Activated T-helper 1 cell treated with anti-CD3 and anti-CD28 coated beads, Interleukin-12 subunit alpha, Interleukin-12 subunit beta, Interleukin-2, Interleukin-4 antibody, amounts not matched to agents 30 ng/mL and 10 ng/mL and 1 ng/mL, durations not matched to agents 14 hours and 24 hours and 36 hours (primary cell): ENCODE measurements at regions of chr19 and their contacts with region 1.

Region 1: DNA sequence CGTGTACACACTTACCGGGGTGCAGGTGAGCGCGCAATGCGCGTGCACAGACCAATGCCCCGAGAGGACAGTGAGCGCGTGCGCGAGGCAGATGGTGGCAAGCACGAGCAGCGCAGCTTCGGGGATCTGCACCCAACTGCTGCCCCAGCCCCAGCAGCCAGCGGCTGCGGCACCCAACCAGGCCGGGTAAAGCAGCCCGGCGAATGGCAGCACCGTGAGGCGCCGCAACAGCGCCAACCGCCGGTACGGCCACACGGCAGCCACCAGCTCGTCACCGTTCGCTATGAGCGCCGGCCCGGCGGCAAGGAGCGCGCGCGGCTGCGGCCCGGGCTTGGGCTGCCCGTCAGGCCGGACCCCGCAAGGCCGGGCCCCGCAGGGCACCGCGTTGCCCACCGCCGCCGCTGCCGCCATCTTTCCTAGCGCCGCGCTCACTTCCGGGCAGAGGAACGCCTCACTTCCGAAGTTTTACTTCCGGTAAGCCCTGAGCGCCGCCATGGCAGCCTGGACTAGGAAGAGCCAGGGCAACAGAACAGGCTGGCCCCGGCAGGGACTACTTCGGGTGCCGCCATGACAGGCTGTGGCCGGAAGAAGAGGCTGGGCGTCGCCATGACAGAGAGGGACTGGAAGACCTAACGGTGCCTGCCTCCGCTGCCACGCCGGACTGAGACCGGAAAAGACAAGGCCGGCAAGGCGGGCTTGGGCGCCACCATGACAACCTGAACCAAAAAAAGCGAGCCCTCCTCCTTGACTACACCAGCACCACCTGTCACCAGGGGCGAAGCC is at the start of gene ATP13A1:
- DNase-seq: peak; percentile 93
- H3K4me3 Mint-ChIP-seq: peak within 1 kb of the TSS; percentile 91
- H3K27ac Mint-ChIP-seq: peak within 1 kb of the TSS; percentile 98
- H3K4me1 Mint-ChIP-seq: peaks cover 28% of the 10 kb centered on the region
- H3K27me3 Mint-ChIP-seq: no peaks in the 10 kb centered on the region
- total RNA-seq, gene ATP13A1: 101 and 104 TPM in 2 replicates

Region 2: DNA sequence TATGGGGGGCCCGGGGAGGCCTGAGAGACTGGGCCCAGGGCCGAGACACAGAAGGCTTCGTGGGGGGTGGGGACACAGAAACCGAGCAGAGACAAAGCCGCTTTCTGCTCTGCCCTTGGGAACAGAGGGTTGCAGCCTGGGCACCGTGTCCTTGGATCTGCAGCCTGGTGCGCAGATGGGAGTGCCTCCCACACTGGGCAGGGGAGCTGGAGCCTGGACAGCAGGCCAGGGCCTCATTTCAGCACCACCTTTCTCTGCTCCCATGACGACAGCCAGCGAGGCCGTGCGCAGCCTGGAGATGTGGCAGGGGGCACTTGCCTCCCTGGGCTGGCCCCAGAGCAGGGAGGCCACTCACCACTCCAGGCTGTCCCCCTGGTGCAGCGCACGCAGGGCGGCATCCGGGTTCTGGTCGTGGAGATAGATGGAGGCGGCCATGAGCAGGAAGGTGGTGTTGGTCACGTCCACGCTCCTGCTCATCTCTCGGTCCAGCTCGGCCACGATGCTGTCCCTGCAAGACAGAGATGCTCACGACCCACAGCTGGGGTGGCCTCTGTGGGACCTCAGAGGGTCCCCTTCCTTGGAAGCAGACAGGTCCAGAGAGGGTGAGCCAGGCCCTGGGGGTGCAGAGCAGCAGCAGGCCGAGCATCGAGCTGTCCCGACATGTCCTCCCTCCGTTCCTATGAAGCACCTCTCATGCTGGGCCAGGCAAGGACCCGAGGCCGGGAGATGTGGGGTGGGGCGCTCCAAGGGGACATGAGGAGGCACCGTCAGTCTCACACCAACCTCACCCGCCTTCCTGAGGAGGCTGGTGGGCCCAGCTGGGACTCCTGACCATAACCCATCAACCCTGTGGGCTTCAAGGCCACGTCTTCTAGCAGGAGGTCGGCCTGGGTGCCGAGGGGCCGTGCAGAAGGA is 756.6 kb before region 1 on chr19:
- intact Hi-C with region 1: no loop called
- DNase-seq: no peak
- H3K4me3 Mint-ChIP-seq: no peak overlapping the region
- H3K27ac Mint-ChIP-seq: no peak overlapping the region
- H3K4me1 Mint-ChIP-seq: no peaks in the 10 kb centered on the region
- H3K27me3 Mint-ChIP-seq: no peaks in the 10 kb centered on the region

Region 3: DNA sequence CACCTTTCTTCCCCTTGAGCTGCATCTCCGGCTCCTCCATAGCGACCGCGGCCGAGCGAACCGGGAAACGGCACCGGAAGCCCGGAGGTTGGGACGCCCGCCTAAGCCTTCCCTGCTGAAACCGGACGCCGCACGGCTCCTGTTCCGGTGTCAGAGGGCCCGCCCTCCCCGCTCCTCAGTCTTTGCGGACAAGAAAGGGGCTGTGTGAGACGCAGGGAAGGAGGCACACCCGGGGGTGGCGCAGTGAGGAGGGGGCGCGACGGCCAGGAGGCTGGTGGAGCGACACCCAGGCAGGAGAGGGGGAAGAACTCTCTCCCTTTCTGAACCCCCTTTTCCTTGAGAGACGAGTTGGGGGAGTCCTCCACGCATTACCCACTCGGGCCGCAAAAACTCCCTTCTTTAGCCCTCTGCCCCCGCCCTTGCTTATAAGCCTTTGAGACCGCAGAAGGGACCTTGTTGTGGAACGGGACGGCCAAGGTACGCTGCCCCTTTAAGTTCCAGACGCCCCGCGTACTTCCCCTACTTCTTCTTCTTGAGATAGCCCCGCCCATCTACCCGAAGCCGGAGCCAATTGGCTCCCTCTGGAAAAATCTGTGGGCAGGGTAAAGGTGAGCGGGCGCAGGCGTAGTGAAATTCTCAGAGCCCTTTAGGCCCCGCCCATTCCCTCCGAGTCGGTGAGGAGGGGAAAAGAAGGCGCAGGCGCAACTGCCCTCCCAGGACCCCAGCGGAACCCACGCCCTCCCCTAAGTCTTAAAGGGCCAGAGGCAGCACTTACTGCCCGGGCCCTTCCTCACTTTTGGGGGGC is 471.2 kb before region 1 on chr19 and contains the starts of genes BORCS8 and RFXANK:
- intact Hi-C with region 1: loop called (anchors 5 kb)
- DNase-seq: peak; percentile 99
- H3K4me3 Mint-ChIP-seq: peak within 1 kb of the TSS; percentile 96
- H3K27ac Mint-ChIP-seq: peak within 1 kb of the TSS; percentile 99
- H3K4me1 Mint-ChIP-seq: peaks cover 20% of the 10 kb centered on the region
- H3K27me3 Mint-ChIP-seq: no peaks in the 10 kb centered on the region
- total RNA-seq, gene BORCS8: 37.8 and 38.6 TPM in 2 replicates
- total RNA-seq, gene RFXANK: 101 and 103 TPM in 2 replicates

Region 4: DNA sequence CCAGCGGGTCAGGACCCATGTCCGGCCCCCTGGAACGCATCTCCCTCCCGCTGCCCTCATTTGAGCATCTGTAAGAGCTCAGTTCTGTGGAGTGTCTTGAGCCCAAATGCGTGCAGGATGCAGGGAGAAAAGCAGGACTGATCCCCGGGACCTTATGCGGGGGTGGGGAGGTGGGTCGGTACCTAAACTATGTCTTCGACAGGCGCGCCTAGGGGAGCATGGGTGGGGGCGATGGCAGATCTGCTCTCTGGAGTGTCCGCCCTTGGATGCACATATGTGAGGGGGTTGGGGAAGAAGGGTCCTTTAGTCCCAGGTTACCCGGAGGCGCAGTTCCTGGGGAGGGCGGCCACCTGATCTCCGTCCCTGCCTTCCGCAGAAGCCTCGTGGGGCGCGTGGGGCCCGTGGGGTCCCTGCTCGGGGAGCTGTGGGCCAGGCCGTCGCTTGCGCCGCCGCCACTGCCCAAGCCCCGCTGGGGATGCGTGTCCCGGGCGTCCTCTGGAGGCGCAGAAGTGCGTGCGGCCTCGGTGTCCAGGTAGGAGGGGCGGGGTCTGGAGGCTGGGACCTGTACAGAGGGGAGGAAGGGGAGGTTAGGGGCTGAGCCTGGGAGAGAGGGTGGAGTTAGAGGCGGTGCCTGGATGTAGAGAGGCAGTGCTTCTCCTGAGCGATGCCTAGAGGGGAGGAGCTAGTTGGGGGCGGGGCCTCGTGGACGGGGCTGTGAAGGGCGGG is 122.6 kb before region 1 on chr19:
- intact Hi-C with region 1: no loop called
- DNase-seq: peak; percentile 67
- H3K4me3 Mint-ChIP-seq: peak overlapping the region; percentile 72
- H3K27ac Mint-ChIP-seq: no peak overlapping the region
- H3K4me1 Mint-ChIP-seq: peaks cover 27% of the 10 kb centered on the region
- H3K27me3 Mint-ChIP-seq: peaks cover 18% of the 10 kb centered on the region

Region 5: DNA sequence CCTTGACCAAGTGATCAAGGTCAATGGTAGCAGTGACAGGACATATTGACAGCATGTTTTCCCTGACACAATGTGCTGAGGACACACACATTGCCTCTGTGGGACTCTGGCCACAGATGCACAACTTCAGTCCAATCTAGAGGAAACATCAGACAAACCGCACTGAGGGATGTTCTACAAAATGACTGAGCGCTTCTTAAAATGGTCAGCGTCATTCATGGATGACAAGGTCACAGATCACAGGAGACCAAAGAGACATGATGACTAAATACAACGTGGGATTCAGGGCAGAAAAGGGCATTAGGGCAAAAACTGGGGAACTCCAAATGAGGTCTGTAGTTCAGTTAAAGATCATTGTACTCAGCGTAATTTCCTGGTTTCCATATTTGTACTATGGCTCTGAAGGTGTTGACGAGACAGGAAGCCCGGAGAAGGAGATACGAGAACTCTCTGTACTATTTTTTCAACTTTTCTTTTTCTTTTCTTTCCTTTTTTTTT is 65.6 kb before region 1 on chr19:
- intact Hi-C with region 1: loop called (anchors 1 kb)
- DNase-seq: peak; percentile 73
- H3K4me3 Mint-ChIP-seq: peak overlapping the region; percentile 79
- H3K27ac Mint-ChIP-seq: peak overlapping the region; percentile 99
- H3K4me1 Mint-ChIP-seq: peaks cover 69% of the 10 kb centered on the region
- H3K27me3 Mint-ChIP-seq: no peaks in the 10 kb centered on the region

Region 6: GRCh38 chr19:19732579-19733501 is 69.4 kb after region 1 on chr19 and contains the start of gene ZNF14:
- intact Hi-C with region 1: loop called (anchors 1 kb)
- DNase-seq: peak; percentile 86
- H3K4me3 Mint-ChIP-seq: peak within 1 kb of the TSS; percentile 99
- H3K27ac Mint-ChIP-seq: peak within 1 kb of the TSS; percentile 92
- H3K4me1 Mint-ChIP-seq: peaks cover 17% of the 10 kb centered on the region
- H3K27me3 Mint-ChIP-seq: no peaks in the 10 kb centered on the region
- total RNA-seq, gene ZNF14: 4.3 and 5.1 TPM in 2 replicates

Region 7: GRCh38 chr19:19865739-19866481 is 202.5 kb after region 1 on chr19 and contains the start of gene ZNF253:
- intact Hi-C with region 1: loop called (anchors 1 kb)
- DNase-seq: peak; percentile 91
- H3K4me3 Mint-ChIP-seq: peak within 1 kb of the TSS; percentile 98
- H3K27ac Mint-ChIP-seq: peak within 1 kb of the TSS; percentile 99
- H3K4me1 Mint-ChIP-seq: peaks cover 18% of the 10 kb centered on the region
- H3K27me3 Mint-ChIP-seq: no peaks in the 10 kb centered on the region
- total RNA-seq, gene ZNF253: 7.8 and 11.1 TPM in 2 replicates

Region 8: GRCh38 chr19:20167020-20167644 is 503.7 kb after region 1 on chr19 and contains the start of gene ZNF486:
- intact Hi-C with region 1: loop called (anchors 10 kb)
- DNase-seq: peak; percentile 81
- H3K4me3 Mint-ChIP-seq: peak within 1 kb of the TSS; percentile 95
- H3K27ac Mint-ChIP-seq: peak within 1 kb of the TSS; percentile 87
- H3K4me1 Mint-ChIP-seq: peaks cover 8% of the 10 kb centered on the region
- H3K27me3 Mint-ChIP-seq: no peaks in the 10 kb centered on the region
- total RNA-seq, gene ZNF486: 4.0 TPM in 2 replicates